ENCODE measurements at regions of chr11 and their contacts with region 1.

Region 1: DNA sequence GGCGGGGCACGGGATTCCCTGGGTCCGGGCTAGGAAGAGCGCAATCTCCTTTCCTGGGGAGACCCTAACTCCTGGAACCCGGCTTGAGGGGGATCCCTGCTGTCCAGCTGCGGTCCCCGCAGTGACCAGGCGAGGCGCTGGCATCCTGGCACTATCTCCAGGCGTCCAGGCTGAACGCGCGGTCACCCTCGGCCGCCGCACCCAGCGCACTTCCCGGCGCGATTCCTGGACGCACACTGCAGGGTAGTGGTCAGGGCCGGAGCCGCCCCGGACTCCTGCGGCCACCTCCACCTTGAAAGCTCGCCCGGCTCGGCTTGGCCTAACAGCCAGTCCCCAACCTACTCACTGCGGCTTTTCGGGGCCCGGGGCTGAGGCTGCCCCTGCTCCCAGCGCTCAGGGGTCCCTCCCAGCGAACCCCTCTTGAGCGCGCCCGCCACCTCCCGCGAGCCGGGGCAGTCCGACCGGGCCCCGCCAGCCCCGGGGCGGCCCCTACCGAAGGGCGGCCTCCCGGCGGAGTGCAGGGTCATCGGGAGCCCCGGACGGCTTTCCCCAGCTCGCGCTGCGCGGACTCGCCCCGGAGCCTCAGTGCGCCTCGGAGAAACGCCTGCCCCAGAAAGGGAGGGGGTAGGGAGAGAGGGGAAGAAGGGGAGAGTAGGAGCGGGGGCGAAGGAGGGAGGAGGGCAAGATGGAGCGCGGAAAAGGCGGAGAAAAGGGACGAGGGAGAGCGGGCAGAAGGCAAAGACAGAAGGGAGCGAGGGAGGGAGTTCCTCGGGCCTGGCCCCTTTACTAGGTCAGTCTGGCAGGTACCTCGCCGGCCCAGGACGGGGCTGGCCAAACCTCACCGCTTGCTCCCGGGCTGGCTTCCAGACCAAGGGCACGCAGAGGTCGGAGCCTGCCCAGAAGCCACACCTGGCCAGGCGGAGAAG is 1.0 kb downstream of the POU2AF3 start:
- DNase-seq: peak; percentile 73 to 86
- ATAC-seq: peak; percentile 83 to 96 (median 92)
- H3K4me3 ChIP-seq: peak overlapping the region; percentile 82
- H3K27ac ChIP-seq: peak overlapping the region; percentile 47
- H3K4me1 ChIP-seq: peaks cover 3% of the 10 kb centered on the region
- H3K27me3 ChIP-seq: no peaks in the 10 kb centered on the region
- CTCF ChIP-seq: peak; percentile 62

Region 2: DNA sequence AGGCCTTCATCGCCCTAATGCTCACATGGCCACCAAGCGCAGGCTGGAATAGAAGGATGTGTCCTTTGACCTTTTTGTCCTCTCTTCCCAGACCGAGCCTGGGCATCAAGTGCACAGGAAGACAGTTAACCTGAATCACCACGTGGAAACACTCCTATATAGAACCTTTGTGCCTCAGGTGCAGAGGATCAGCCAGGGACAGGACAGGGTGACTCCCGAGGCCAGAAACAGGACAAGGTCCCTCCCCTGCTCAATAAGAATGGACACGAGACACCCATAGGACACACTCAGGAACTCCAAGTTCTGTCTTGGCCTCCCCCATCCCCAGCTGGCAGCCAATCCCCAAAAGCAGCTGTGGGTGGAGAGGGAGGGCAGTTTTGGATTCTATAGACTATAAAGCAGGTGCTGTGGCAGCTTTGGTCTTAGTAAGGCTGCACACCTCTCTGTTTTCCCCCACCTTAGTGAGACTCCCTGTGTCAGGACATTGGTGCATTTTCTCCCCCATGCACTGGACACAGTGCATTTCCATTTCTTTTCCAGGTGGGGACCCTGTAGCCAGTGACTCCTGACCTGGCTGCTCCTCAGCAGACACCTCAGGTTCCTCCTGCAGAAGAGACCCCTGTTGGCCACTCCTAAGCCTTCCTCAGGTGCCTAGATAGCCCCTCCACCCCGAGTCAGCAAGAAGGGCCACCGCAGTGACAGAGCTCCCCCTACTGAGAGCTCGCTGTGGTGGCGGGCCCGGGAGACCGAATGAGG is 123.3 kb after region 1 on chr11:
- intact Hi-C with region 1: loop called in 1 of 2 experiments (anchors 5 kb)
- DNase-seq: peak; percentile 37 to 68
- ATAC-seq: peak; percentile 67 to 86 (median 80)
- H3K4me3 ChIP-seq: no peak overlapping the region
- H3K27ac ChIP-seq: no peak overlapping the region
- H3K4me1 ChIP-seq: peaks cover 14% of the 10 kb centered on the region
- H3K27me3 ChIP-seq: no peaks in the 10 kb centered on the region
- CTCF ChIP-seq: peak; percentile 66

Measured in psoas muscle (tissue), 8 donors.